ENCODE measurements at regions of chr9 and their contacts with region 1.

Region 1: GRCh38 chr9:72864327-72864726 is 88.5 kb downstream of the ALDH1A1 start:
- DNase-seq: no peak
- H3K4me3 ChIP-seq: no peak overlapping the region
- H3K27ac ChIP-seq: no peak overlapping the region
- H3K4me1 ChIP-seq: no peaks in the 10 kb centered on the region
- H3K27me3 ChIP-seq: no peaks in the 10 kb centered on the region
- CTCF ChIP-seq: no peak

Region 2: DNA sequence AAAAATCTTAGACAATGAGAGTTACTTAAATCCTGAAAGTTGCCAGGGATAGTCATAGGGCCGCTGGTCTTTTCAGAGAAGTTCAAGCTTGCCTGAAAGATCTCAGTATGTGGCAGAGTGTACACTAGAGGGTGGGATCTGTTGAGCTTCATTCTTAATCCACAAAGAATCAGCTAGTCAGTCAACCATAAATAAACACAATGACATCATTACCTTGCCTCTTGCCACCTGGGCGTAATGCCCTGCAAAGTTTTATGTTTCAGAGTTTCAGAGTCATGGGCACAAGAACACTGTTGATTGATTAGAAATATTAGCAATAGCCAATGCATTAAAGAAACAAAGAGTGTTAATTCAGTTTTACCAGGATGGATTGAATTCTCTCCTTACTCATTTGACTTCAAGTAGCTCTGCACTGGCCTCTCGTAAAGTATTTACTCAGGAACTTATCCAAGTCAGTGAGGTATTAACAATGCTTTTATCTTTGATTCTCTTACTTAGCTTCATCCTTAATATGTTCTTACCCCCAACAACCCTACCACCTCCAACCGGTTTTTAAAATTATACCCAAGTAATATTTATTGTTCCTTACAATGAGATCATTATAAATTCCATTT is 273.1 kb after region 1 on chr9:
- CTCF ChIA-PET with region 1: interaction called, 16 read pairs
- POLR2A ChIA-PET with region 1: no interaction called
- intact Hi-C with region 1: no loop called
- DNase-seq: no peak
- H3K4me3 ChIP-seq: no peak overlapping the region
- H3K27ac ChIP-seq: no peak overlapping the region
- H3K4me1 ChIP-seq: peaks cover 32% of the 10 kb centered on the region
- H3K27me3 ChIP-seq: no peaks in the 10 kb centered on the region
- CTCF ChIP-seq: no peak